Activated CD4-positive, alpha-beta memory T cell treated with anti-CD3 and anti-CD28 coated beads for 36 hours (primary cell): ENCODE measurements at regions of chr7 and their contacts with region 1.

Region 1: DNA sequence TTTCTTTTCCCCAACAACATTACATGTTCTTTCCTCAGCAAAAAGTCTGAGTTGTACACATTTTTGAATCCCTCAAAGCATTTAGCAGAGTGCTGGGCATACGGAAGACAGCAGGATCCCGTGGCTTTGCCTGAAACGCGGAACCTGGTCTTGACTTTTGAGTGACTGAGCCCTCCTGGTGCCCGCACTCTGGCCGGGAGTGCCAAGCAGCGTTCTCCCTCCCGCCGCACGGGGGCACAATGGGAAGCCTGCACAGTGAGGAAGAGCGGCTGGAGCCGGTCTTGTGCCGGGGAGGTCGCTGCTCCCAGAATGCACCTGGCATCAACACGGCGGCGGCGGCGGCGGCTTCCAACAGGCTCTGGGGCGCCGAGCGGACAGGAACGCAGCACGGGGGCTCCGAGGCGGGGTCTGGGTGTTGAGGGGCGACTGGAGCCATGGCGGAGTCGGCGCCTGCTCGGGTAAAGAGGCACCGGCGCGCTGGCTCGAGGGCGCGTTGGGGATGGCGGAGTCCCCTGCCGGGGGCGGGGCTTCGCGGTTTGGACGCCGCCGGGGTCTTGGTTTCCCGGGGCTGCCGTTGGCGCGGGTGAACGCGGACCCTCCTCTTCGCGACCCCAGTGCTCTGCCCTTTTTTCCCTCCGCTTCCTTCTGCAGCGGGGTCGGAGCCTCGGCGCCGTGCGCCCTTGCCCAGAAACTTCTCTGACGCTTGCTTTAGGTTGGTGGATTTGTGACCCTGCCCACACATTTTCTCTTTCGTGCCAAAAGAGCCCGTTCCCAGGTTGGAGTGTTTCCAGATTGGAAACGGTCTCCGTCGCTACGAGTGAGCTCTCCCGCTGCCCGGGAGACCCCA is at the start of gene ZNF212:
- DNase-seq: peak; percentile 94
- H3K4me3 Mint-ChIP-seq: peak within 1 kb of the TSS; percentile 94
- H3K27ac Mint-ChIP-seq: peak within 1 kb of the TSS; percentile 90
- H3K4me1 Mint-ChIP-seq: peaks cover 42% of the 10 kb centered on the region
- H3K27me3 Mint-ChIP-seq: peaks cover 6% of the 10 kb centered on the region
- total RNA-seq, gene ZNF212: 21.5 to 21.9 TPM

Region 2: DNA sequence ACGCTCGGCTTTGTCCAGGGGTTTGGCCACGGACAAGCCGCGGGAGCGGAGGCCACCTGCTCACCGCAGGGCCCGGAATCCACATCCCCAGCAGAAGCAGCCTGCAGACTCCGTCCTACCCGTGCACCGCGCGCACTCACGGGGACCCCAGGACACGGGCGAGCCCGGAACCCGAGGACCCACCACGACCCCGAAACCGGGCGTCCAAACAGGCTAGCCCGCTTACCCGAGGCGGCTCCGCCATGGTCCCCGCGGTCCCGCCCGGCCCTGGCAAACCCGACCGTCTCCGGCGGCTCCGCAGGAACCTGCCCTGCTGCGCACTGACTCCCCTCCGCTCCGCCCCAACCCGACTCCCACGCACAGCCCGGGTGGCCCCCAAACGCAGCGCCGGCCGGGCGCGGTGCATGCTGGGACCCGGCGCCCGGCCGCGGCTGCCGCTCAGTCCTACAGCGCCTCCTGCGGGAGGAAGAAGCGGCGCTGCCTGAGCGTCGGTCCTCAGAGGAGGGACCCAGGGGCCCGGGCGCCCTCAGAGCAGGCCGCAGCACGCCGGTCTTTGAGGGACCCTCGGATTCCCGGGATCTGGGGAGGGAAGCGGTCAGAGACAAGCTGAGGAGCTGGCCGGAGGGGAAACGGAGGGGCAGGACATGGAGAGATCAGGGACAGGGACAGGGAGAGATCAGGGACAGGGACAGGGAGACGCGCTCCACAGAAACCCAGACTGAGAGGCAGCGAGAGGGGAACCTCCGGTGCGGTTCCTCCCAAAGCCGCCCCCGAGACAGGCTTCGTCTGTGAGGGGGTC is 149.0 kb before region 1 on chr7 and contains the start of gene ZNF786:
- CTCF ChIA-PET with region 1: no interaction called
- POLR2A ChIA-PET with region 1: no interaction called
- intact Hi-C with region 1: loop called (anchors 2 kb)
- DNase-seq: peak; percentile 96
- H3K4me3 Mint-ChIP-seq: peak within 1 kb of the TSS; percentile 96
- H3K27ac Mint-ChIP-seq: peak within 1 kb of the TSS; percentile 99
- H3K4me1 Mint-ChIP-seq: peaks cover 21% of the 10 kb centered on the region
- H3K27me3 Mint-ChIP-seq: no peaks in the 10 kb centered on the region
- total RNA-seq, gene ZNF786: 4.5 to 6.1 TPM

Region 3: GRCh38 chr7:149125863-149126661 is 113.5 kb before region 1 on chr7 and contains the start of gene ZNF425:
- CTCF ChIA-PET with region 1: no interaction called
- POLR2A ChIA-PET with region 1: no interaction called
- intact Hi-C with region 1: loop called (anchors 2 kb)
- DNase-seq: peak; percentile 95
- H3K4me3 Mint-ChIP-seq: peak within 1 kb of the TSS; percentile 98
- H3K27ac Mint-ChIP-seq: peak within 1 kb of the TSS; percentile 98
- H3K4me1 Mint-ChIP-seq: peaks cover 18% of the 10 kb centered on the region
- H3K27me3 Mint-ChIP-seq: no peaks in the 10 kb centered on the region
- total RNA-seq, gene ZNF425: 0.74 to 0.75 TPM

Region 4: GRCh38 chr7:149195180-149196150 is 44.1 kb before region 1 on chr7 and contains the start of gene ZNF282:
- CTCF ChIA-PET with region 1: interaction called, 10 read pairs
- POLR2A ChIA-PET with region 1: interaction called, 5 read pairs
- intact Hi-C with region 1: no loop called
- DNase-seq: peak; percentile 89
- H3K4me3 Mint-ChIP-seq: peak within 1 kb of the TSS; percentile 92
- H3K27ac Mint-ChIP-seq: peak within 1 kb of the TSS; percentile 93
- H3K4me1 Mint-ChIP-seq: peaks cover 51% of the 10 kb centered on the region
- H3K27me3 Mint-ChIP-seq: no peaks in the 10 kb centered on the region
- total RNA-seq, gene ZNF282: 61.7 to 61.9 TPM

Region 5: DNA sequence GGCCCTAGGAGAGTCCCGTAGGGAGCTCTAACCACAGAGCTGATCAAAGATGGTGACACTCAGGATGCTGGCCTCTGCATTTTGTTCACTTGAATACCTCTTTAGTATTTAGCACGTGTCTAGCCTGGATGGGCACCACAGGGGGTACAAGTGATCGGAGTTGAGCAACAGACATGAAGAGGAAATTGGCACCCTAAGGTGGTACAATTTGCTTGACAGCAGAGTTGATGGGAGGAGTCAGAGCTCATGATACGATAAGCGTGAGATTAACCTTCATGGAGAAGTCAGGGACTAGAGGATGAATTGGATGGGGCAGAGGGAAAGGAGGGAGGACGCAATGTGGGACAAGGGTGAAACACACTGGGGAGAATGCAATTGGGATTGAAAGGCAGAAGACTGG is 10.0 kb before region 1 on chr7:
- CTCF ChIA-PET with region 1: interaction called, 4 read pairs
- POLR2A ChIA-PET with region 1: interaction called, 3 read pairs
- intact Hi-C with region 1: loop called (anchors 1 kb)
- DNase-seq: no peak
- H3K4me3 Mint-ChIP-seq: no peak overlapping the region
- H3K27ac Mint-ChIP-seq: no peak overlapping the region
- H3K4me1 Mint-ChIP-seq: no peaks in the 10 kb centered on the region
- H3K27me3 Mint-ChIP-seq: peaks cover 8% of the 10 kb centered on the region

Region 6: GRCh38 chr7:149284850-149285626 is 45.5 kb after region 1 on chr7:
- CTCF ChIA-PET with region 1: interaction called, 5 read pairs
- POLR2A ChIA-PET with region 1: interaction called, 6 read pairs
- intact Hi-C with region 1: loop called (anchors 2 kb)
- DNase-seq: peak; percentile 99
- H3K4me3 Mint-ChIP-seq: peak overlapping the region; percentile 82
- H3K27ac Mint-ChIP-seq: peak overlapping the region; percentile 48
- H3K4me1 Mint-ChIP-seq: peaks cover 37% of the 10 kb centered on the region
- H3K27me3 Mint-ChIP-seq: no peaks in the 10 kb centered on the region

Region 7: DNA sequence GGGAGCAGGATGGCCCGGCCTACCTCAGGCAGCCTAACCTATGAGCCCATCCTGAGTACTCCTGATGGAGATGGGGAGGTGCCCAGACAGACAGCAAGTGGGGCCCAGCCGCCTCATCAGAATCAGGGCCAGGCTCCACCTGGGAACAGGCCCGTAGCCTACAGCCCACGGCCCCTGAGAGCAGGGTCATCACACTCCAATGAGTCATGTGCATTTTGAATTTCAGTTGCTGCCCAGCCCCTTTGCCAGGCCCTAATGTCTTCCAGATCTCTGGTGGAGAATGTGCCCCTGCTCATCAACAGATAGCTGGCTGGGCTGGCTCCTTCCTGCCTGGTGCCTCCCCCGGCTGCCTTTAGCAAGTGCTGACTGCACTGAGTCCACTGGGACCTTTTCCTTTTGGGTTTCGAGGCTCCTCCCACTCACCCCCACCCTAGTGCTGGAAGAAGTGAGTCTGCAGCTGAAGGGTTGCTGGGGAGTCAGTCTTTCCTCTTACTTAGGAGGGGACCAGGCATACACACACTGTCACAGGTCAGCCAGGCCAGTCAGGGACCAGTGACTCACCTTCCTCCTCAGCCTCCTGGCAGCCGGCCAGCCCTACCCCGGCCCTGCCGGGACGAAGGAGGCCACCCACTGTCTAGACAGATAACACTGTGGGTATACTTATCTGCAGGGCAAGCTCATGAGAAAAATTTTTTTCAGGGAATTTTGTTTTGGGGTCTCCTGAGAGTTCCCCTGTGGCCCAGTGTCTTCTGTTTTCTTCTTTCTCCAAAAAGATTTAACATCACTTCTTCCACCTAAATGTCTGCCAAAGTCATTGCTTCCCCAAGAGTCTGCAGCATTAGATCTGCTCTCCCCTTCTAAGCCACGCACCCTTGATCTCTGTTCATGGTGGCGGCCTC is 1799.6 kb after region 1 on chr7:
- CTCF ChIA-PET with region 1: no interaction called
- POLR2A ChIA-PET with region 1: no interaction called
- intact Hi-C with region 1: no loop called
- DNase-seq: peak; percentile 91
- H3K4me3 Mint-ChIP-seq: no peak overlapping the region
- H3K27ac Mint-ChIP-seq: peak overlapping the region; percentile 91
- H3K4me1 Mint-ChIP-seq: peaks cover 16% of the 10 kb centered on the region
- H3K27me3 Mint-ChIP-seq: no peaks in the 10 kb centered on the region